BJ (cell line): ENCODE measurements at regions of chr14 and their contacts with region 1.

Region 1: DNA sequence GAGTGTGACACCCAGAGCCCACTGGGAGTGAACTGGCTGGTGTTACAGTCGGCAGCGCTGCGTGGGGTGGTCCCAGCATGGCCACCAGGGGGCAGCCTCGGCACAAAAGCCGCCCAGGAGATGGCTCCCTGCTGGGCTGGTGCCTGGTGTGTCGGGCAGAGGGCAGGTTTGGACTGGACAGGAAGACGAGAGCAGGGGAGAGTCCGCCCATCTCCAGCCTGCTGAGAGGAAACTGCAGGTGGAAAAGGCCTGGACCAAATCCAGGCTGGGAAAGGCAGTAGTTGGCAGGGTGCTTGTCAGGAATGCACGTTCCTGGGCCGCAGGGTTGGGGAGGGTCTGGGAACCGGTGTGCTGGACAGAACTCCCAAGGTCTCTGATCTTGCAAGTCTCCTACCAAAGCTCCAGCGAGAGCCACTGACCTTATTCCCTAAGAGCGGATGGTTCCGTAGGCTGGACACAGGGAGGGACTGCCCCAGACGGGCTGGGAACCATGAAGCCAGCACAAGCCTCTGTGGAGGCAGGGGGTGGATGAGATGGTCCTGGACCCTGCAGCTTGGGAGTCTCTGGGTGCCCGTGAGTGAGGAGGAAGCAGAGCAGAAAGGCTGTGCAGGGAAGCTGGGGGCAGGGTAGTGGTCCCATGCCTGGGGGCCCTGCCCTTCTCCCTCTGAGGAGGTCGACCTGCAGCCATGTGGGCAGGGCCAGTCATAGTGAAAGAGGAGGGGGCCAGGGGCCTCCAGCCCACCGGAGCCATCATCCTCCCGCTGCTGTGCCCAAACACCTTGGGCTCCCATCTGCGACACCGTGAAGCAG is 1.8 kb downstream of the AHNAK2 start:
- DNase-seq: no peak
- H3K4me3 ChIP-seq: no peak overlapping the region
- H3K27me3 ChIP-seq: no peaks in the 10 kb centered on the region
- CTCF ChIP-seq: peak; percentile 95

Region 2: GRCh38 chr14:104895786-104896661 is 80.4 kb before region 1 on chr14:
- CTCF ChIA-PET with region 1: interaction called, 10 read pairs
- POLR2A ChIA-PET with region 1: no interaction called
- DNase-seq: no peak
- H3K4me3 ChIP-seq: no peak overlapping the region
- H3K27me3 ChIP-seq: no peaks in the 10 kb centered on the region
- CTCF ChIP-seq: no peak

Region 3: GRCh38 chr14:104932676-104933631 is 43.4 kb before region 1 on chr14:
- CTCF ChIA-PET with region 1: interaction called, 42 read pairs
- POLR2A ChIA-PET with region 1: interaction called, 3 read pairs
- DNase-seq: peak; percentile 20
- H3K4me3 ChIP-seq: peak overlapping the region; percentile 52
- H3K27me3 ChIP-seq: peaks cover 4% of the 10 kb centered on the region; the same call in 1 of the 2 replicates
- CTCF ChIP-seq: peak; percentile 66

Region 4: GRCh38 chr14:104964546-104964945 is 11.9 kb before region 1 on chr14:
- CTCF ChIA-PET with region 1: interaction called, 14 read pairs
- POLR2A ChIA-PET with region 1: no interaction called
- DNase-seq: no peak
- H3K4me3 ChIP-seq: no peak overlapping the region
- H3K27me3 ChIP-seq: no peaks in the 10 kb centered on the region
- CTCF ChIP-seq: no peak

Region 5: GRCh38 chr14:105034314-105035039 is 58.1 kb after region 1 on chr14:
- CTCF ChIA-PET with region 1: interaction called, 10 read pairs
- POLR2A ChIA-PET with region 1: no interaction called
- DNase-seq: no peak
- H3K4me3 ChIP-seq: no peak overlapping the region
- H3K27me3 ChIP-seq: no peaks in the 10 kb centered on the region
- CTCF ChIP-seq: no peak